Activated CD8-positive, alpha-beta T cell treated with anti-CD3 and anti-CD28 coated beads, Interleukin-2, amount 10 ng/mL, durations not matched to agents 7 days and 5 days (primary cell): ENCODE measurements at regions of chr10 and their contacts with region 1.

Region 1: DNA sequence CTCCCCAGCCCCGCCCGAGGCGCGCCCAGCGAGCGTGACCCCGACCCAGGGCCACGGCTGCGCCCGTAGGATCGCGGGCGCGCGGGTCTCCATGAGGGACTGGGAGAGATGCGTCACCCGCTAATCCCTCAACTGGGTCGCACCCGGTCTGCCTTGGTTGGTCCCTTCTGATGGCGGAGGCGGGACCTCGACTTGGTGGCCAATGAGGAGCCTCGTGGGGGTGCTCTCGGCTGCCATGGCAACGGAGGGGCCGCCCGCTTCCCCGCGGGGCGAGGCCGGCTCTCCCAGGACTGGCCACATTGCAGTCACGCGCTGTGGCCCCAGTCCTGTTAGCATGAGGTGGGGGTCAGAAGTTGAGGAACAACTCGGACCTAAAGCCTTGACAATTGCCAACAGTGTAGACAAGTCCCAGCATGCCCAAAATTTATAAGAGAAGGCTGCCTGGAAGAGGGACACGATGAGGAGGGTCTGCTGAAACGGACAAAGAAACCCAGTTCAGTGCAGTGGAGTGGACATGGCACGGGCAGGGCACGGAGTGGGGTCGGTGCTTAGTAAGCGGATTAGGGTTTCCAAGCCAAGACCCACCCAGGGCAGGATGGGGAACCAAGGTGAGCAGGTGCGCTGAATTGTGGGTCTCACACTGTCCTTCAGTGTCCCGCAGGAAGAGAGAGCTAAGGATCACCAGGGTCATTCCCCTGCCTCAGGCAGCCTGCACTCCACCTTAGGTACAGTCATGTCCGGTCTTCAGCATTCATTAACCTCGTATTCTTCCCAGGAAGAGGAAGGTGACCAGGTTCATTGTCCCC is 24.4 kb downstream of the DDIT4 start:
- DNase-seq: peak; percentile 96
- ATAC-seq: peak; percentile 82
- H3K4me3 Mint-ChIP-seq: peak overlapping the region; percentile 72
- H3K27ac Mint-ChIP-seq: peak overlapping the region; percentile 98
- H3K4me1 Mint-ChIP-seq: peaks cover 65% of the 10 kb centered on the region
- H3K27me3 Mint-ChIP-seq: no peaks in the 10 kb centered on the region

Region 2: GRCh38 chr10:72016608-72017312 is 281.4 kb before region 1 on chr10:
- CTCF ChIA-PET with region 1: no interaction called
- POLR2A ChIA-PET with region 1: no interaction called
- DNase-seq: no peak
- ATAC-seq: no peak
- H3K4me3 Mint-ChIP-seq: no peak overlapping the region
- H3K27ac Mint-ChIP-seq: no peak overlapping the region
- H3K4me1 Mint-ChIP-seq: peaks cover 10% of the 10 kb centered on the region
- H3K27me3 Mint-ChIP-seq: peaks cover 6% of the 10 kb centered on the region

Region 3: DNA sequence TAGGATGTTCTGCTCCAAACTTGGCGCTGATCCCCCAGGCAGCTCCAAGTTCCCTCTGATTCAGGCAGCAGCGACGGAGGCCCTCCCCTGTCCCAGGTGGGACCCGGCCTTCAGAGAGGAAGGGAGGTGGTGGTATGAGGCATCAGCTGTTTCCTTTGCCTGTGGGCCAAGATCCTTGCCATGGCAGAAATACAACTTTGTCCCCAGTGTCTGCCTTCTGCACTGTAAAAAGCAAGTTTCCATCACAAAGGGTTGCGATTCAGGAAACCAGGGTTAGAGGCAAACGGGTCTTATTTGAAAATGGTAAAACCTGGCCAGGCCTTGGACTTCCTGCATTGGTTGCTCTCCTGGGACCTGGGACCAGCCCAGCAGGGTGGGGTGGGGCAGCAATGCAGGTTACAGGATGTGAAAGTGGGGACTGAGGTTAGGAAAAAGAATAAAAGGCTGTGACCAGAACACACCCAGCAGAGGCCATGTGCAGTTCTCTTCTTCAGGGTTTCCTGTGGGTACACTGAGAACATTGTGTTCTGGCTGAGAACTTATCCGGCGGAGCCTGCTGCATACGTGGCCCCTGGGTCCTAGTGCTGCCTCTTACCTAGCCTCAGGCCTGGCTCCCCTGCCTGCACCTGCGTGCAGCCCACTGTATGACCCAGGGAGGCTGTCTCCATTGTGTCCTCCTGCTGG is 49.6 kb before region 1 on chr10:
- CTCF ChIA-PET with region 1: interaction called, 5 read pairs
- POLR2A ChIA-PET with region 1: interaction called, 18 read pairs
- DNase-seq: peak; percentile 91
- ATAC-seq: peak; percentile 88
- H3K4me3 Mint-ChIP-seq: peak overlapping the region; percentile 80
- H3K27ac Mint-ChIP-seq: peak overlapping the region; percentile 95
- H3K4me1 Mint-ChIP-seq: peaks cover 85% of the 10 kb centered on the region
- H3K27me3 Mint-ChIP-seq: no peaks in the 10 kb centered on the region

Region 4: DNA sequence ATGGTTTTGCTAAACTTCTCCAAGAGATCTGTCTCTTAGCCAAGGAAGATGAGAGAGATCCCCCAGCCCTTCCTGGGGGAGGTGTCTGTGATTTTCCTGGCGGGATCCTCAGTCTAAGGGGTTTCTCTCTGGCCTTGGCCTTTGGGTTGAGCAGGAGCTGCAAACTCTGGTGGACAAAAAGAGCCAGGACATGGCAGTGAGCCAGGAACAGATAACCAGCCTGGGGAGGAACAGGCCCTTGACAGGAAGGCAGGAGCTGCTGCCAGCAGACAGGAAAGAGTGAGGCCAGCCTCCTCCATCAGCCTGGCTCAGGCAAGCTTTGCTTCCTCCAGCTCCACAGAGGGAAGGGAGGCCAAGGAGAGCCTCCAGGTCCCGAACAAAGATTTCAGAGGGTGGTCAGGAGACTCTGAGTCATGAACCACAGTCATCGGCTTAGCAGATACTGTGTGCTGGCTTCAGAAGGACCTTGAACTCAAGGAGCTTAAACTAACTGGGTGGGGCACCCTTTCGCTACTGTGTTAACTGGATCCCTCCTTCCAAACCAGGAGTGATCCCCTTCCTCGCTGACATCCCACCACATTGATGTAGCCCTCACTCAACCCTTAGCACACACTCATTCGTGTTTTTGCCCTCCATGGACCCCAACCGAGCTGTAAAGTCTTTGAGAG is 10.3 kb after region 1 on chr10:
- CTCF ChIA-PET with region 1: interaction called, 11 read pairs
- POLR2A ChIA-PET with region 1: interaction called, 21 read pairs
- DNase-seq: peak; percentile 53
- ATAC-seq: peak; percentile 53
- H3K4me3 Mint-ChIP-seq: no peak overlapping the region
- H3K27ac Mint-ChIP-seq: peak overlapping the region; percentile 80
- H3K4me1 Mint-ChIP-seq: peaks cover 76% of the 10 kb centered on the region
- H3K27me3 Mint-ChIP-seq: no peaks in the 10 kb centered on the region

Region 5: DNA sequence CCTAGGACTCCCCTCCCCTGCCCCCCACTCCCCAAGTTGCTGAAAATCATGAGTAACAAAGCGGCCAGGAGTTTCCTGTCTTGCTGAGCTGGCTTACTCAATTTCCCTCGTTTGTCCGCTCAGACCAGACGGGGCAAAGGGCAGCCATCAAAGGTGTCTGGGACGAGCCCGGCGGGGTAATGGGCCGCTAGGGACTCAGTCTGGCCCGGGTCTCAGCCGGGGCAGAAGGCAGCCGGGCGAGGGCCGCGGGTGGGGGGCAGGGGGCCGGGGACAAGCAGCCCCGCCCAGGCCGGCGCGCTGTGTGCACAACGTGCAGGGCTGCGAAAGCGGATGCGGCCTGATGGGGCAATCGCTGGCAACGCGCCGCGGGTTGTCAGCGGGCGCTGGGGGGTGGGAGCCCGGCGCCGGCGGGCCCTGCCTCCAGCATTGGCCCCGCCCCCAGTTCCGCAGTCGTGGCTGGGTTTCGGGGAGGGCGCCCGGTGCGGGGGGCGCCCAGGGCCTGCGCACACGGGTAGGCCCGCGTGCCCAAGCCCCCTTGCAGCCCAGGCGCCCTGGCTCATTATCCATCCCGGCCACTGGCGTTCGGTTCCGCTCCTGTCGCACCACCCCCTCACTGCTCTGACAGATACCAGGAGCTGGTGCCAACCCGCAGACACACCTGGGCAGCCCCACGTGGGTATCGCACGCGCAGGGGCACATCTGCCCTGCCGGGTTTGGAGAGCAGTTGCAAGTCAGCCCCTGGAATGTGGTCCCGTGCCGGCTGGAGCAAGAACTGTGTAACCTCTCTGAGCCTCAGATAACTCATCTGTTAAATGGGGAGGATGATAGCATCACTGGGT is 21.5 kb after region 1 on chr10:
- CTCF ChIA-PET with region 1: interaction called, 6 read pairs
- POLR2A ChIA-PET with region 1: interaction called, 76 read pairs
- DNase-seq: peak; percentile 92
- ATAC-seq: peak; percentile 78
- H3K4me3 Mint-ChIP-seq: peak overlapping the region; percentile 81
- H3K27ac Mint-ChIP-seq: peak overlapping the region; percentile 99
- H3K4me1 Mint-ChIP-seq: peaks cover 88% of the 10 kb centered on the region
- H3K27me3 Mint-ChIP-seq: no peaks in the 10 kb centered on the region